Activated CD4-positive, alpha-beta memory T cell treated with anti-CD3 and anti-CD28 coated beads, Interleukin-2, amount 10 ng/mL, durations not matched to agents 7 days and 5 days (primary cell): ENCODE measurements at regions of chr2 and their contacts with region 1.

Region 1: DNA sequence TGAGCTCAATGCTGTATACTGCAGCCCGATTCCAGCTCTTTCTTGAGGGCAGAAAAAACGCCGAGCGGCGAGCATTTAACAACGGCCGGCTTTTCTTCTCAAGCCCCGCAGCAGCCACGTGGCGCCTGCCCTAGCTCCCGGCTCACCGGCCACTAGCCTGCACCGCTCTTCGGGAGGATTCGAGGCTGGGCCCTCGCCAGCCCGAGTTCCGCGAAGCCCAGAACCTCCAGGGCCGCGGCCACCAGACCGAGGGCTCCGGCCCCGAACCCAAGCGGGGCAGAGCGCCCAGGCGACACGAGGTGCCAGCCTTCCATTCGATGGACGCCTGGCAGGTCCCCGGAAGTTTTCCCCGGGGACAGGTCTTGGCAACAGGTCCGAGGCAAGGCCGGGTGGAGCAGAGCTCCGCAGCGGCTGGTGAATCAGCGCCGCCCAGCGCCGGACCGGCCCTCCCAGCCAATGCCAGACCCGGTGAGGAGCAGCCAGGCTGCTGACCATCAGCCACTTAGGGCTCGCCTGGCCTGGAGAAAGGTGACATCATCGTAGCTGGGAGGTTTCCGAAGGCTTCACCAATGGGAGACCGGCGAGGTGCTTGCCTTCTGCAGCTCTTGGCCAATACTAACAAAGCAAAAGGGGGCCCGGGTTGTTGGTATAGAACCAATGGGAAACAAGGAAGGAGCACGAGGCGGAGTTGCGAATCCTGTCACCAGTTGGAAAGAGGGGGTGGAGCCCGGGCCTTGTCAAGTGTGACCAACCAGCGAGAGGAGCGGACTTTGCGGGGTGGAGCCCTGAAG is 544 bp upstream of the MXD1 start:
- DNase-seq: peak; percentile 100
- H3K4me3 Mint-ChIP-seq: peak overlapping the region; percentile 82
- H3K27ac Mint-ChIP-seq: peak overlapping the region; percentile 81
- H3K4me1 Mint-ChIP-seq: peaks cover 43% of the 10 kb centered on the region
- H3K27me3 Mint-ChIP-seq: no peaks in the 10 kb centered on the region

Region 2: GRCh38 chr2:69798909-69799526 is 115.3 kb before region 1 on chr2:
- CTCF ChIA-PET with region 1: no interaction called
- POLR2A ChIA-PET with region 1: no interaction called
- DNase-seq: no peak
- H3K4me3 Mint-ChIP-seq: no peak overlapping the region
- H3K27ac Mint-ChIP-seq: no peak overlapping the region
- H3K4me1 Mint-ChIP-seq: peaks cover 24% of the 10 kb centered on the region
- H3K27me3 Mint-ChIP-seq: no peaks in the 10 kb centered on the region

Region 3: DNA sequence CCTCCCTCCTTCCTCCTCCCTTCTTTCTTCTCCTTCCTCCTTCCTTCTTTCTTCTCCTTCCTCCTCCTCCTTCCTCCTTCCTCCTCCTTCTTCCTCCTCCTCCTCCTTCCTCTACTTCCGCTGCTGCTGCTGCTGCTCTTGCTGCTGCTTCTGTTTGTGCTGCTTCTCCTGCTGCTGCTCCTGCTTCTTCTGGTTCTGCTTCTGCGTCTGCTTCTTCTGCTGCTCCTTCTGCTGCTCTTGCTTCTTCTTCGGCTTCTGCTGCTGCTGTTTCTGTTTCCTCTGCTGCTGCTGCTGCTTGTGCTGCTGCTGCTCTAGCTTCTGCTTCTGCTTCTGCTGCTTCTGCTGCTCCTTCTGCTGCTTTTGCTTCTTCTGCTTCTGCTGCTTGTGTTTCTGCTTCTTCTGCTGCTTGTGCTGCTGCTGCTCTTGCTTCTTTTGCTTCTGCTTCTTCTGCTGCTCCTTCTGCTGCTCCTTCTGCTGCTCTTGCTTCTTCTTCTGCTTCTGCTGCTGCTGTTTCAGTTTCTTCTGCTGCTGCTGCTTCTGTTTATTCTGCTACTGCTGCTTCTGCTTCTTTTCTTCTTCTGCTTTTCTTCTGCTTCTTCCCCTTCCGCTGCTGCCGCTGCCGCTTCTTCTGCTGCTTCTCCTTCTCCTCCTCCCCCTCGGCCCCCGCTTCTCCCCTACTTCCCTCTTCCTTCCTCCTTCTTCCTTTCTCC is 12.0 kb before region 1 on chr2:
- CTCF ChIA-PET with region 1: interaction called, 9 read pairs
- POLR2A ChIA-PET with region 1: interaction called, 39 read pairs
- DNase-seq: peak; percentile 27
- H3K4me3 Mint-ChIP-seq: peak overlapping the region; percentile 79
- H3K27ac Mint-ChIP-seq: peak overlapping the region; percentile 91
- H3K4me1 Mint-ChIP-seq: peaks cover 56% of the 10 kb centered on the region
- H3K27me3 Mint-ChIP-seq: no peaks in the 10 kb centered on the region

Region 4: GRCh38 chr2:70043252-70043875 is 129.0 kb after region 1 on chr2:
- CTCF ChIA-PET with region 1: interaction called, 10 read pairs
- POLR2A ChIA-PET with region 1: interaction called, 96 read pairs
- DNase-seq: peak; percentile 89
- H3K4me3 Mint-ChIP-seq: peak overlapping the region; percentile 44
- H3K27ac Mint-ChIP-seq: peak overlapping the region; percentile 97
- H3K4me1 Mint-ChIP-seq: peaks cover 75% of the 10 kb centered on the region
- H3K27me3 Mint-ChIP-seq: no peaks in the 10 kb centered on the region

Region 5: GRCh38 chr2:70078384-70078783 is 164.0 kb after region 1 on chr2:
- CTCF ChIA-PET with region 1: interaction called, 251 read pairs
- POLR2A ChIA-PET with region 1: interaction called, 287 read pairs
- DNase-seq: no peak
- H3K4me3 Mint-ChIP-seq: no peak overlapping the region
- H3K27ac Mint-ChIP-seq: peak overlapping the region; percentile 75
- H3K4me1 Mint-ChIP-seq: peaks cover 51% of the 10 kb centered on the region
- H3K27me3 Mint-ChIP-seq: no peaks in the 10 kb centered on the region

Region 6: DNA sequence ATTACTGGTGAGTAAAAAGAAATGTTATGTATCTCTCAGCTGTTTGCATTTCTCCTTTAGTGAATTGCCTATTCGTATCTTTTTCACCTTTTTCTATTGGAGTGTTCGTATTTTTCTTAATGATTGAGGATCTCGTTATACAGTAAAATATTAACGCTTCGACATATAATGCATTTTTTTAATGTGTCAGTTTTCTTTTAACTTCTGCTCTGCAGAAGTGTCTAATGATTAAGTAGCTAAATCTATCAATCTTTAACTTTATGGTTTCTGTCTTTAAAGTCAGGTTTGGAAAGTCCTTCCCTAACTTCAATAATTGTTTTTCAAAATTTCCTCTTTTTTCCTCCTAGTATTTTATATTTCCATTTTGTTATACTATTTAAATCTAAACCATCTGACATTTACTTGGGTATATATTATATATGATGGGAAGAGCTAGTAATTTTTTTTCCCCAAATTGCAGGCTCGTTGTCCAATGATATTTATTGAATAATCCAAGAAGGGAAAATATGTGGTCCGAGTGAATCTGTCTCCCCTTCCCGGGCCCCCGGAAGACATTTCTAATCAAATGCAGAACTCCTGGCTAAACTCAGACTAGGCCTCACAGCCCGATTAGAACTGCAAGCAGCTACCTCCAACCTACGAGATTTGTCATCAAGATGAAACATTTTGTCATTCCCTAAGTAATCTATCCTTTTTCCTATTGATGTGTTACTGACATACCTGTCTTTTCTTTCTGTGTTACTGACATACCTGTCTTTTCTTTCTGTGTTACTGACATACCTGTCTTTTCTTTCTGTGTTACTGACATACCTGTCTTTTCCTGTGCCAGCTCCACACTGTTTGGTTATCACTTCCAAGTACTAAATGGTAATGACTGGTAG is 190.1 kb after region 1 on chr2:
- CTCF ChIA-PET with region 1: interaction called, 5 read pairs
- POLR2A ChIA-PET with region 1: interaction called, 17 read pairs
- DNase-seq: peak; percentile 54
- H3K4me3 Mint-ChIP-seq: peak overlapping the region; percentile 72
- H3K27ac Mint-ChIP-seq: peak overlapping the region; percentile 90
- H3K4me1 Mint-ChIP-seq: peaks cover 56% of the 10 kb centered on the region
- H3K27me3 Mint-ChIP-seq: no peaks in the 10 kb centered on the region

Region 7: GRCh38 chr2:70142590-70143313 is 228.4 kb after region 1 on chr2:
- CTCF ChIA-PET with region 1: interaction called, 97 read pairs
- POLR2A ChIA-PET with region 1: interaction called, 218 read pairs
- DNase-seq: peak; percentile 100
- H3K4me3 Mint-ChIP-seq: peak overlapping the region; percentile 80
- H3K27ac Mint-ChIP-seq: peak overlapping the region; percentile 97
- H3K4me1 Mint-ChIP-seq: peaks cover 71% of the 10 kb centered on the region
- H3K27me3 Mint-ChIP-seq: no peaks in the 10 kb centered on the region

Region 8: GRCh38 chr2:70301344-70302194 is 387.2 kb after region 1 on chr2 and contains the start of gene FAM136A:
- CTCF ChIA-PET with region 1: interaction called, 21 read pairs
- POLR2A ChIA-PET with region 1: interaction called, 19 read pairs
- DNase-seq: peak; percentile 90
- H3K4me3 Mint-ChIP-seq: peak within 1 kb of the TSS; percentile 93
- H3K27ac Mint-ChIP-seq: peak within 1 kb of the TSS; percentile 91
- H3K4me1 Mint-ChIP-seq: peaks cover 42% of the 10 kb centered on the region
- H3K27me3 Mint-ChIP-seq: peaks cover 2% of the 10 kb centered on the region
- total RNA-seq, gene FAM136A: 34.1 to 37.4 TPM